ENCODE measurements at regions of chr7 and their contacts with region 1.

Region 1: GRCh38 chr7:22559829-22560489 is 60.0 kb upstream of the STEAP1B start:
- DNase-seq: peak; percentile 76
- H3K4me3 ChIP-seq: no peak overlapping the region
- H3K27ac ChIP-seq: no peak overlapping the region
- H3K27me3 ChIP-seq: no peaks in the 10 kb centered on the region
- CTCF ChIP-seq: peak; percentile 91

Region 2: DNA sequence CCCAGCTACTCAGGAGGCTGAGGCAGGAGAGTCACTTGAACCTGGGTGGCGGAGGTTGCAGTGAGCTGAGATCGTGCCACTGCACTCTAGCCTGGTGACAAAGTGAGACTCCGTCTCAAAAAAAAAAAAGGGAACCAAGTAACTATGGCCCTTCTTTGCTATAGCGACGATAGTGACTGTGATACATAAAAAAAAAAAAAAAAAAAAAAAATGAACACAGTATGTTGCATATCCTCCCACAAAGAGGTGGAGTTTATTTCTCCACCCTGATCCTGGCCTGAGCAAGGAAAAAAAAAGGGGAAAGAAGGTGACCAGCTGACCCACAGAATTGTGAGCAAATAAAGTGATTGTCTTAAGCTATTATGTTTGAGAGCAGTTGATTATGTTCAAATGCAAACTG is 17.7 kb before region 1 on chr7:
- CTCF ChIA-PET with region 1: no interaction called
- POLR2A ChIA-PET with region 1: no interaction called
- DNase-seq: no peak
- H3K4me3 ChIP-seq: no peak overlapping the region
- H3K27ac ChIP-seq: no peak overlapping the region
- H3K27me3 ChIP-seq: peaks cover 13% of the 10 kb centered on the region
- CTCF ChIP-seq: no peak

Region 3: DNA sequence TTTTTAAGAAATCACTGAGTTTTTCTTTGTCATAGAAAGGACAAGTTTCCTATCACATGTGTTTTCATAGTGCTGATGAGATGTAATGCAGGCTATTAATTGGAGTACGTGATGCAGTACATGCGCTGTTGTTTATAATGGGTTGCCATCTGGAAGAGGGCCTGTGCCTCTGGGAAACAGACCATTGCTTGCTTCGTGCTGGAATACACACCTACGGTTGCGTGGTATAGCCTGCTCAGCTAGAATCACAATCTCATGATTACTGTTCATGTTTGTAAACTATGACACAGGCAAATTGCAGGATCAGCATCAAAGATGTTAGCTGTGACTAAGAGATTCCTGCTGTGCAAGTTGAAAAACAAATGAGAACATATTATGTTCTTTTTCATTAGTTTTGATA is 47.2 kb after region 1 on chr7:
- CTCF ChIA-PET with region 1: interaction called, 12 read pairs
- POLR2A ChIA-PET with region 1: interaction called, 3 read pairs
- DNase-seq: no peak
- H3K4me3 ChIP-seq: no peak overlapping the region
- H3K27ac ChIP-seq: no peak overlapping the region
- H3K27me3 ChIP-seq: no peaks in the 10 kb centered on the region
- CTCF ChIP-seq: no peak

Region 4: DNA sequence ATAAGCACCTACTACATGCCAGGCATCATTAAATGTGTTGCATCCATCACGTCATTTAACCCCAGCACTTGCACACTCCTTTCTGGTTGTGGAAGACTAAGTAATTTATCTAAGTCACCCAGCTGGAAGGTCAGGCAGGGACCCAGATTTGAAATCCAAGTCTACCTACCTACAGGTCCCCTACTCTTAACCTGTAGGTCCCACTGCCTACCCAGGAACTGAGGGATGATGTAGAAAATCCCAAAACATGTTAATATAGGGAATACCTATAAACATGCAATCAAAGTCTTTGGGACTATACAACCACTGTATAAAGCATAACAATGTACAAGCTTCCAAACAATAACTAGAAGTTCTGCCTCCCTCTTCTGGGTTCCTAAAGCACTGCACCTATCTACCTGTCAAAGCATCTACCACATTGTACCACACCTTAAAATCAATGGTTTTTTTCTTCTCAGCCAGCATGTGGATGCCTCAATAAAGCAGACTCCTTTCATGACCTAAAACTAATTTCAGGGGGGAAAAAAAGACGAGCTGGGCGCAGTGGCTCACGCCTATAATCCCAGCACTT is 172.7 kb after region 1 on chr7:
- CTCF ChIA-PET with region 1: interaction called, 174 read pairs
- POLR2A ChIA-PET with region 1: interaction called, 5 read pairs
- DNase-seq: no peak
- H3K4me3 ChIP-seq: no peak overlapping the region
- H3K27ac ChIP-seq: no peak overlapping the region
- H3K27me3 ChIP-seq: no peaks in the 10 kb centered on the region
- CTCF ChIP-seq: peak; percentile 50

Region 5: GRCh38 chr7:22822486-22823141 is 262.7 kb after region 1 on chr7 and contains the start of gene TOMM7:
- CTCF ChIA-PET with region 1: interaction called, 11 read pairs
- POLR2A ChIA-PET with region 1: interaction called, 3 read pairs
- DNase-seq: peak; percentile 94
- H3K4me3 ChIP-seq: peak within 1 kb of the TSS; percentile 95
- H3K27ac ChIP-seq: peak within 1 kb of the TSS; percentile 69
- H3K27me3 ChIP-seq: no peaks in the 10 kb centered on the region
- CTCF ChIP-seq: no peak
- polyA plus RNA-seq, gene TOMM7: 390 and 549 TPM in 2 replicates

Region 6: DNA sequence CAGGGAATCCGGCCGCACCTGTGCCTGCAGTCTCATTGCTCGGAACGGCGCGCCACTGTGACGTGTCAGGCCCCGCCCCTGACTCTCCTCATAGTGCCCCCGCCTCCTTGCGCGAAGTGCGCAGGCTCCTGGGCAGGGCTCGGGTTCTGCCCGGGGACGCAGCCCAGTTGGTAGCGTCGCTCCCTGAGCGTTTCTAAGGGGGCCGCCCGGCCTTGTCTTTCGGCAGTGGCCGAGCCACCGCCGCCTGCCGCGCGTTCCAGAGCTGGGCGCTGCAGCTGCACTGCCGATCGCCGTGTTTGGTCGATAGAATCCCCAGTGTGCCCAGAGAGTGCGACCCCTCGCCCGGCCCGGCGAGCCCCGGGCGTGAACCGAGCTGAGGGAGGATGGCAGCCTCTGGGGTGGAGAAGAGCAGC is 545.7 kb after region 1 on chr7 and contains the start of gene KLHL7:
- CTCF ChIA-PET with region 1: interaction called, 10 read pairs
- POLR2A ChIA-PET with region 1: no interaction called
- DNase-seq: peak; percentile 59
- H3K4me3 ChIP-seq: peak within 1 kb of the TSS; percentile 92
- H3K27ac ChIP-seq: peak within 1 kb of the TSS; percentile 89
- H3K27me3 ChIP-seq: no peaks in the 10 kb centered on the region
- CTCF ChIP-seq: no peak
- polyA plus RNA-seq, gene KLHL7: 39.6 and 53.7 TPM in 2 replicates

Measured in AG04450 (cell line).